Natural killer cell (primary cell): ENCODE measurements at regions of chr9 and their contacts with region 1.

Region 1: DNA sequence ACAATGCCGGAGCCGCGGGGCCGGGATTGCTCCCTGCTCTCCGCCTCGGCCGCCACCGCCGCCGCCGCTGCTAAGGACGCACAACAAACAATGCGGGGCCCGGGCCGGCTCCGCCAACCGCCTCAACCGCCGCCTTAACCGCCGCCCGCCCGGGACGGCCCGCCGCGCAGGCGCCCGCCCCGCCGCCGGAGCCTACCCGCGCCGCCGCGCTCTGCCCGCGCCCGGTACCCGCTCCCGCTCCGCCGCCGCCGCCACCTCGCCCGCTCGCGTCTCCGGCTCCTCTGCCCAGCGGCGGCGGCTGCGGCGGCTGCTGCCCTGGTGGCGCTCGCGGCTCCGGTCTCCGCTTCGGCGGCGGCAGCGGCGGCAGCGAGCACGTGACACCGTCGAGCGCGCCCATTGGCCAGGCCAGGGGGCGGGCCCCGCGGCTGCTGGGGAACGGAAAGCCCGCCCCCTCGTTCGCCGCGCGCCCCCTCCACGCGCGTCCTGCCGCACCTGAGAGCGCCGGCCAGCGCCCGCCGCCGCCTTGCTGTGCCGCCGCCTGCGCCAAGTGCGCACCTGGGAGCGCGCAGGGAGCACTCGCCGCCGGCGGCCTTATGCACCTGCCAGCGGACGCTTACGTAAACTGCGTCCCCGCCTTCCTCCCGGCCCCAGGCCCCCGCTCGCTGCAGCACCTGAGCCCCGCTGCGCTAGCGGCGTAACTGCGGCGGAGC is at the start of gene STRBP:
- DNase-seq: peak; percentile 92 to 96
- ATAC-seq: peak; percentile 92 to 95 (median 94)
- H3K4me3 ChIP-seq: peak within 1 kb of the TSS; percentile 56
- H3K4me3 Mint-ChIP-seq: peak within 1 kb of the TSS; percentile 73
- H3K27ac ChIP-seq: peak within 1 kb of the TSS; percentile 57
- H3K27ac Mint-ChIP-seq: peak within 1 kb of the TSS in 1 of 2 donors; percentile 78
- H3K4me1 ChIP-seq: peaks cover 18% of the 10 kb centered on the region
- H3K4me1 Mint-ChIP-seq: peaks cover 6 to 19% of the 10 kb centered on the region in 2 donors
- H3K27me3 ChIP-seq: no peaks in the 10 kb centered on the region
- H3K27me3 Mint-ChIP-seq: peaks cover 3 to 7% of the 10 kb centered on the region in 2 donors
- CTCF ChIP-seq: no peak
- total RNA-seq, gene STRBP: 6.0 to 8.3 (median 7.9) TPM

Region 2: DNA sequence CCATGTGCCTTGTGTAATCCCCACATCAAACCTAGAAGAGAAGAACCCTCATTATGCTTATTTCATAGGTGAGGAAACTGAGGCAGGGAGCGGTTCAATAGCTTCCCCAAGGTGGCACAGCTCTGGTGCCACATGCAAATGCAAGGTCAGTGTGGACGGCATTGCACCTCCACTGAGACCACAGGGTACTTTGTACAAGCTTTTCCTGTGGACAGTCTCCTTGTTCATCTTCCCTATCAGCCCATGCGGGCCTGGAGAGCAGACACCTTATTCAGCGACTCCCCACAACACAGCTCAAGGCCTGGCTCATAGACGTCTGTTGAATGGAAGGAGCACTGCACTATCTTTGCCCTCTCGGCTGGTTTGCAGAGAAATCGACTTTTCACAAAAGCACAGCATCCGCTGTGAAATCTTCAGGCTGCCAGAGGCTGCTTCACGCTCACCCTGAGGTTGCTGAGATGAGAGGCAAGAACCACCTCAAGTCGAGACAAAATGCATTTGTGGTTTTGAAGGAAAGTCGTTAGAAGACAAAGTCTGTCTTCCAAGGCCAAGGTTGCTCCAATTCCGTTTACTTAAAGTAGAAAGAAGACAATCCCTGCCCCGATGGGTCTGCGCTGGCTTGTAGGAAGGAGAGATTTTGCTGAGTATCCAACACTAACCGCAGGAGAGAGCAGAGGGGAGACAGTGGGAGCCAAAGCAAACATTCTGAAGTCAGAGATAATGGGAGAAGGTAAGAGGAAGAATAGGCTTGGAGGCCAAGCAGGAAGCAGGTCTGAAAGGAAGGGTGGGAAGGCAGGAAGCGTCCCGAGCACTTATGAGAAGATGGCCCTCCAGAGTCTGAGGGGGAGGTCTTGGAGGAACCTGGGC is 34.2 kb after region 1 on chr9:
- intact Hi-C with region 1: loop called (anchors 2 kb)
- DNase-seq: peak in 1 of 2 donors; percentile 52
- ATAC-seq: peak; percentile 16 to 54 (median 31)
- H3K4me3 ChIP-seq: no peak overlapping the region
- H3K4me3 Mint-ChIP-seq: peak overlapping the region; percentile 59
- H3K27ac ChIP-seq: no peak overlapping the region
- H3K27ac Mint-ChIP-seq: peak overlapping the region; percentile 10 to 23
- H3K4me1 ChIP-seq: peaks cover 44% of the 10 kb centered on the region
- H3K4me1 Mint-ChIP-seq: peaks cover 32 to 43% of the 10 kb centered on the region in 2 donors
- H3K27me3 ChIP-seq: peaks cover 2% of the 10 kb centered on the region
- H3K27me3 Mint-ChIP-seq: peaks cover 22 to 26% of the 10 kb centered on the region in 2 donors
- CTCF ChIP-seq: no peak